Body of pancreas (tissue), 4 donors: ENCODE measurements at regions of chr7 and their contacts with region 1.

Region 1: DNA sequence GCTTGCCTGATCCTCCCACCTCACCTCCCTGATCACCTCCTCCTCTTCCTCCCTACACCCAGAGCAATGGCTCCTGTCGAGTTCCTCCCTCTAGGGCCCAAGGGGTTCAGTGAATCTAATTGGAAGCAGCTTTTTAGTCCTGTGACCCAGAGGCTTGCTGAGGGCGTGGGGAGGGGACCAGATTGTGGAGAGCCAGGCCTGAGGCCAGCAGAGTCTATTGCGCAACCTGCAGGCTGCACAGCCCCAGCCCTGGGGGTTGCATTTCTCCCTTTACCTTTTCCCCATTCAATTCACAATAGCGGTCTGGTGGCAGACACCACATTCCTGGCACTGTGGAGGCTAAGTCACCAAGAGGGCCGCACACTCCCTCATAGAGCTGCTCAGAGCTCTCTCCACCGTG is 32.5 kb downstream of the GHRHR start:
- DNase-seq: peak in 2 of 4 donors; percentile 24 to 32
- ATAC-seq: no peak
- H3K4me3 ChIP-seq: no peak overlapping the region
- H3K27ac ChIP-seq: no peak overlapping the region
- H3K4me1 ChIP-seq: no peaks in the 10 kb centered on the region
- H3K27me3 ChIP-seq: no peaks in the 10 kb centered on the region
- CTCF ChIP-seq: no peak
- POLR2A ChIP-seq: no peak

Region 2: GRCh38 chr7:31114593-31115343 is 118.5 kb after region 1 on chr7:
- intact Hi-C with region 1: loop called (anchors 5 kb)
- DNase-seq: no peak
- ATAC-seq: no peak
- H3K4me3 ChIP-seq: no peak overlapping the region
- H3K27ac ChIP-seq: no peak overlapping the region
- H3K4me1 ChIP-seq: no peaks in the 10 kb centered on the region
- H3K27me3 ChIP-seq: no peaks in the 10 kb centered on the region
- CTCF ChIP-seq: no peak
- POLR2A ChIP-seq: no peak

Region 3: GRCh38 chr7:31175672-31176071 is 179.4 kb after region 1 on chr7:
- intact Hi-C with region 1: no loop called
- DNase-seq: no peak
- ATAC-seq: no peak
- H3K4me3 ChIP-seq: no peak overlapping the region
- H3K27ac ChIP-seq: no peak overlapping the region
- H3K4me1 ChIP-seq: no peaks in the 10 kb centered on the region
- H3K27me3 ChIP-seq: no peaks in the 10 kb centered on the region
- CTCF ChIP-seq: peak in 3 of 7 experiments; percentile 7 to 14 (median 13)
- POLR2A ChIP-seq: no peak